ENCODE measurements at regions of chr11 and their contacts with region 1.

Region 1: DNA sequence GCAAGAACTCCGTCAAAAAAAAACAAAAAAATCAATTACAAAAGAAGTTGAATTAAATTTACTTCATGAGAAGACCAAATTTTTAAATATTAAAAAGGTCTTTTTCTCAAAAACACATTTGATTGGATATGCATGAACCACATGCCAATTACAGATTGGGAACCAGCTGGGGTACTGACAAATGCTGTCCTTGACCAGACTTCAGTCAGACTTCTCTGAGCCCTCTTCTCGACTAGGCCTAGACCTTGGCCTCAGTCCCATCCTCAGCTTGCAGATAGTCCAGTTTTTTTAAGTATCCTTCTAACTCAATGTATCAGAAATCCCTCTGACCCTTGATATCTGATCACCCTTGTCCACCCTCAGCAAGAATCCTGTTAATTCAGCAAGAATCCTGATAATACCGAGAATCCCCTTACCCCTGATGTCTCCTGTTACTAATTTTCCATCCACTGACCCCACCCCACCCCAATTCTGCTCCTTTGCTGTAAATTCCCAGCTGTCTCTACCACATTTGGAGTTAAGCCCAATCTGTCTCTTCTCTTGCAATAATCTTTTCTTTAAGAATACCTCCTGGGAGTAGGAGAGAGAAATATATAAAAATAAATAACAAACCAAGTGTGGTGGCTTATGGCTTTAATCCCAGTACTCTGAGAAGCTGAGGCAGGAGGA is 30.9 kb downstream of the OR4D9 start:
- DNase-seq: no peak
- ATAC-seq: no peak
- H3K4me3 ChIP-seq: no peak overlapping the region
- H3K27ac ChIP-seq: peak overlapping the region in 1 of 2 experiments; percentile 6; a peak in 1 of 6 replicates
- H3K4me1 ChIP-seq: peaks cover 18% of the 10 kb centered on the region
- CTCF ChIP-seq: no peak
- EP300 ChIP-seq: no peak
- POLR2A ChIP-seq: no peak
- RAD21 ChIP-seq: no peak

Region 2: DNA sequence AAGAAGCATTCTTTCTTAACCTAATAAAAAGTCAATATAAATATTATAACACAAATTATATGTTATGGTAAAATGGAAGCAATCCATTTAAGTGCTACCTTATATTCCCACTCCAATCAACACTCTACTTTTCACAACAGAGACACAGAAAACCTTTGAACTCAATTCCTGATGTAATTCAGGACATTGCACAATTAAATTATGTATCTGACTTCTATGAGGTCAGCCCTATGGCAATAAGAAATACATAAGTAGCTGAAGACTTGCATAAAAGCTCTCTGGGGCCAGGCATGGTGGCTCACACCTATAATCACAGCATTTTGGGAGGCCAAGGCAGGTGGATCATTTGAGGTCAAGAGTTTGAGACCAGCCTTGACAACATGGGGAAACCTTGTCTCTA is 62.4 kb before region 1 on chr11:
- CTCF ChIA-PET with region 1: no interaction called
- POLR2A ChIA-PET with region 1: no interaction called
- DNase-seq: no peak
- ATAC-seq: no peak
- H3K4me3 ChIP-seq: no peak overlapping the region
- H3K27ac ChIP-seq: no peak overlapping the region
- H3K4me1 ChIP-seq: no peaks in the 10 kb centered on the region
- CTCF ChIP-seq: no peak
- EP300 ChIP-seq: no peak
- POLR2A ChIP-seq: no peak
- RAD21 ChIP-seq: no peak

Region 3: GRCh38 chr11:59523541-59523940 is 18.7 kb before region 1 on chr11:
- CTCF ChIA-PET with region 1: interaction called, 18 read pairs
- POLR2A ChIA-PET with region 1: no interaction called
- DNase-seq: peak in 1 of 2 experiments; percentile 30
- ATAC-seq: peak; percentile 87 to 89
- H3K4me3 ChIP-seq: no peak overlapping the region
- H3K27ac ChIP-seq: no peak overlapping the region
- H3K4me1 ChIP-seq: no peaks in the 10 kb centered on the region
- CTCF ChIP-seq: no peak
- EP300 ChIP-seq: no peak
- POLR2A ChIP-seq: no peak
- RAD21 ChIP-seq: no peak

Region 4: GRCh38 chr11:59528713-59529112 is 13.6 kb before region 1 on chr11:
- CTCF ChIA-PET with region 1: interaction called, 18 read pairs
- POLR2A ChIA-PET with region 1: no interaction called
- DNase-seq: no peak
- ATAC-seq: no peak
- H3K4me3 ChIP-seq: no peak overlapping the region
- H3K27ac ChIP-seq: no peak overlapping the region
- H3K4me1 ChIP-seq: no peaks in the 10 kb centered on the region
- CTCF ChIP-seq: no peak
- EP300 ChIP-seq: no peak
- POLR2A ChIP-seq: no peak
- RAD21 ChIP-seq: no peak

Region 5: GRCh38 chr11:59560702-59561469 is 18.6 kb after region 1 on chr11:
- CTCF ChIA-PET with region 1: interaction called, 22 read pairs
- POLR2A ChIA-PET with region 1: interaction called, 9 read pairs
- DNase-seq: peak; percentile 83 to 92
- ATAC-seq: peak; percentile 41 to 51
- H3K4me3 ChIP-seq: peak overlapping the region; percentile 87
- H3K27ac ChIP-seq: peak overlapping the region; percentile 86 to 88
- H3K4me1 ChIP-seq: 0 out of 3 replicates have a peak, but pooled peaks cover 5% of the 10 kb centered on the region
- CTCF ChIP-seq: no peak
- EP300 ChIP-seq: no peak
- POLR2A ChIP-seq: no peak
- RAD21 ChIP-seq: no peak

Region 6: GRCh38 chr11:59615637-59616395 is 73.5 kb after region 1 on chr11 and contains the start of gene OSBP:
- CTCF ChIA-PET with region 1: interaction called, 5 read pairs
- POLR2A ChIA-PET with region 1: interaction called, 13 read pairs
- DNase-seq: peak; percentile 99 to 100
- ATAC-seq: peak; percentile 91 to 95
- H3K4me3 ChIP-seq: peak within 1 kb of the TSS; percentile 75
- H3K27ac ChIP-seq: peak within 1 kb of the TSS; percentile 84 to 97
- H3K4me1 ChIP-seq: peaks cover 29% of the 10 kb centered on the region; the same call in 2 of the 3 replicates
- CTCF ChIP-seq: no peak
- EP300 ChIP-seq: no peak
- POLR2A ChIP-seq: peak; percentile 56
- RAD21 ChIP-seq: no peak
- polyA plus RNA-seq, gene OSBP: 31.7 and 39.6 TPM in 2 replicates

Region 7: GRCh38 chr11:59680287-59681154 is 138.2 kb after region 1 on chr11:
- CTCF ChIA-PET with region 1: interaction called, 13 read pairs
- POLR2A ChIA-PET with region 1: interaction called, 8 read pairs
- DNase-seq: peak; percentile 75 to 89
- ATAC-seq: peak; percentile 99 to 100
- H3K4me3 ChIP-seq: no peak overlapping the region
- H3K27ac ChIP-seq: peak overlapping the region in 1 of 2 experiments; percentile 65; a peak in 2 of 6 replicates
- H3K4me1 ChIP-seq: no peaks in the 10 kb centered on the region
- CTCF ChIP-seq: peak; percentile 81
- EP300 ChIP-seq: no peak
- POLR2A ChIP-seq: no peak
- RAD21 ChIP-seq: peak; percentile 89 to 92

Measured in A549 (cell line).